ENCODE measurements at regions of chr3 and their contacts with region 1.

Region 1: DNA sequence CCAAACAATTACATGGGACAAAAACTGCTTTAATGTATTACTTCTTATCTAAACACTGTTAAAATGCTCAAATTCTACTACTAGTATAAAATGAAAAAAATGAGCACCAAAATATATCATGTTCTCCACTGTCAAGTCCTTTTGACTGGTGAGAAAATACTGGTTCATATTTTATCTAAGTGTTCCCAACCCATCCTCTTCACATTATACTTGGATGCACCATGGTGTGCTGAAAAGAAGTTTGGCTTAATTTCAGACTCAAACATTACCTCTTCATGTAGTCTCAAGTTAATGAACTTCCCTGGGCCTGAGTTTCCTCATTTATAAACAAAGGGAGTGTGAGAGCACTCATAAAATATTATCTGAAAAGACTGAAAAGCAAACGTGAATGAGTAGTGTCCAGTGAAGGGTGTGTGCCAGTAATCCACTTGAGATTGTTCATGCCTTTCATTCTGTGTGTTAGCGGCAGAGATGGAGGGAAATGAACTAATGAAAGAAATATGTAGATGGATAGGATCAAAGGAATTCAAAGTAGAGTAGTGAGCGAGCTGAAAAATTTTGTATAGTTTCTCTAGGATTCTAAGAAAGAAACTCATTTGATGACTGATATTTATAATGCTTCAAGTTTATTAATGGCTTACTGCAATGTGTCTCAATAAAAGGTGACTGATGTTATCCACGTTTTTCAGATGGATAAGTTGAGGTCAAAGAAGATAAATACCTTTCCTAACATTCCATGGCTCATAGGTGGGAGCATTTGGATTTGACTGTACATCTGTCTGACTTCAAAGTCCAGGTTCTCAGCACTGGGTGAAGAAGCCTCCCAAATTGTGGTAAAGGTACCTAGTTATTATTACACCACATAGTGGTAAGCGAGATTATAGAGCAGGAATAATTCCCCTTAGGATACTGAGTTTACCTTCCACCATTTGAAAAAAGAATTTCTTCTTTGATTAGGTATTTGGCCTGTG is 263.4 kb downstream of the NLGN1 start:
- DNase-seq: no peak
- ATAC-seq: no peak
- H3K4me3 ChIP-seq: no peak overlapping the region
- H3K27ac ChIP-seq: no peak overlapping the region
- H3K4me1 ChIP-seq: no peaks in the 10 kb centered on the region
- H3K27me3 ChIP-seq: no peaks in the 10 kb centered on the region
- CTCF ChIP-seq: no peak

Region 2: GRCh38 chr3:173911446-173911845 is 250.5 kb after region 1 on chr3:
- CTCF ChIA-PET with region 1: interaction called, 15 read pairs
- POLR2A ChIA-PET with region 1: no interaction called
- in situ Hi-C with region 1: no loop called
- intact Hi-C with region 1: no loop called
- DNase-seq: no peak
- ATAC-seq: no peak
- H3K4me3 ChIP-seq: no peak overlapping the region
- H3K27ac ChIP-seq: no peak overlapping the region
- H3K4me1 ChIP-seq: no peaks in the 10 kb centered on the region
- H3K27me3 ChIP-seq: no peaks in the 10 kb centered on the region
- CTCF ChIP-seq: no peak

Region 3: DNA sequence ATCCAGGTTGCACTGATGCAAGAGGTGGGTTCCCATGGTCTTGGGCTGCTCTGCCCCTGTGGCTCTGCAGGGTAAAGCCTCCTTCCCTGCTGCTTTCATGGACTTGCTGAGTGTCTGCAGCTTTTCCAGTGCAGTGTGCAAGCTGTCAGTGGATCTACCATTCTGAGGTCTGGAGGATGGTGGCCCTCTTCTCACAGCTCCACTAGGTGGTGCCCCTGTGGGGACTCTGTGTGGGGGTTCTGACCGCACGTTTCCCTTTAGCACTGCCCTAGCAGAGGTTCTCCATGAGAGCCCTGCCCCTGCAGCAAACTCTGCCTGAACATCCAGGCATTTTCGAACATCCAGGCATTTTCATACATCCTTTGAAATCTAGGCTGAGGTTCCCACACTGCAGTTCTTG is 868.4 kb after region 1 on chr3:
- CTCF ChIA-PET with region 1: no interaction called
- POLR2A ChIA-PET with region 1: no interaction called
- in situ Hi-C with region 1: no loop called
- intact Hi-C with region 1: no loop called
- DNase-seq: no peak
- ATAC-seq: no peak
- H3K4me3 ChIP-seq: no peak overlapping the region
- H3K27ac ChIP-seq: no peak overlapping the region
- H3K4me1 ChIP-seq: no peaks in the 10 kb centered on the region
- H3K27me3 ChIP-seq: no peaks in the 10 kb centered on the region
- CTCF ChIP-seq: peak; percentile 27; the same call in 1 of the 2 replicates

Measured in Panc1 (cell line).